Activated CD4-positive, alpha-beta T cell treated with anti-CD3 and anti-CD28 coated beads, Interleukin-2, amount 10 ng/mL, durations not matched to agents 24 days and 14 days (primary cell): ENCODE measurements at regions of chr4 and their contacts with region 1.

Region 1: GRCh38 chr4:184263910-184264732 is 46.4 kb upstream of the ENPP6 start:
- DNase-seq: peak; percentile 97
- H3K4me3 Mint-ChIP-seq: peak overlapping the region; percentile 34
- H3K27ac Mint-ChIP-seq: peak overlapping the region; percentile 84
- H3K4me1 Mint-ChIP-seq: peaks cover 48% of the 10 kb centered on the region
- H3K27me3 Mint-ChIP-seq: no peaks in the 10 kb centered on the region

Region 2: GRCh38 chr4:182881919-182882318 is 1382.2 kb before region 1 on chr4:
- intact Hi-C with region 1: no loop called
- DNase-seq: no peak
- H3K4me3 Mint-ChIP-seq: no peak overlapping the region
- H3K27ac Mint-ChIP-seq: no peak overlapping the region
- H3K4me1 Mint-ChIP-seq: no peaks in the 10 kb centered on the region
- H3K27me3 Mint-ChIP-seq: no peaks in the 10 kb centered on the region

Region 3: GRCh38 chr4:184237612-184238011 is 26.5 kb before region 1 on chr4:
- intact Hi-C with region 1: loop called (anchors 1 kb)
- DNase-seq: peak; percentile 87
- H3K4me3 Mint-ChIP-seq: peak overlapping the region; percentile 68
- H3K27ac Mint-ChIP-seq: peak overlapping the region; percentile 94
- H3K4me1 Mint-ChIP-seq: peaks cover 51% of the 10 kb centered on the region
- H3K27me3 Mint-ChIP-seq: no peaks in the 10 kb centered on the region

Region 4: GRCh38 chr4:184287697-184288255 is 23.7 kb after region 1 on chr4:
- intact Hi-C with region 1: loop called (anchors 1 kb)
- DNase-seq: peak; percentile 64
- H3K4me3 Mint-ChIP-seq: peak overlapping the region; percentile 57
- H3K27ac Mint-ChIP-seq: peak overlapping the region; percentile 89
- H3K4me1 Mint-ChIP-seq: peaks cover 45% of the 10 kb centered on the region
- H3K27me3 Mint-ChIP-seq: no peaks in the 10 kb centered on the region

Region 5: GRCh38 chr4:184457535-184458249 is 193.6 kb after region 1 on chr4:
- intact Hi-C with region 1: loop called (anchors 2 kb)
- DNase-seq: no peak
- H3K4me3 Mint-ChIP-seq: no peak overlapping the region
- H3K27ac Mint-ChIP-seq: peak overlapping the region; percentile 18
- H3K4me1 Mint-ChIP-seq: peaks cover 60% of the 10 kb centered on the region
- H3K27me3 Mint-ChIP-seq: no peaks in the 10 kb centered on the region

Region 6: GRCh38 chr4:184538023-184538599 is 274.0 kb after region 1 on chr4:
- intact Hi-C with region 1: loop called (anchors 1 kb)
- DNase-seq: peak; percentile 89
- H3K4me3 Mint-ChIP-seq: peak overlapping the region; percentile 90
- H3K27ac Mint-ChIP-seq: peak overlapping the region; percentile 92
- H3K4me1 Mint-ChIP-seq: peaks cover 33% of the 10 kb centered on the region
- H3K27me3 Mint-ChIP-seq: no peaks in the 10 kb centered on the region

Region 7: DNA sequence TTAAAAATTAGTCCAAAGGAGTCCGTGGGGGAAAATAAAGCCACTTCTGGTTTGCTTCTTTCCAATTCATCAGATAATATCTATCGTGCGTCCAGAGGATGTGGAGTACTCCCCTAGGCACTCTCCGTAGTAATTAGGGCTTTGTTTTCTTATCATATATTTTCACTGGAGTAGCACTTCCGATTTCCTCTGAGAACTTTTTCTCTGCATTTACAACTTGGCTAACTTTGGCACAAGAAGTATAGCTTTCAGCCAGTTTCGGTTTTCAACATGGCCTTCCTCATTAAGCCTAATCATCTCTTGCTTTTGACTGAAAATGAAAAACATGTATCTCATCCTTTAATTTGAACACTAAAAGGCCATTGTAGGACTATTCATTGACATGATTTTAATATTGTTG is 304.6 kb after region 1 on chr4:
- intact Hi-C with region 1: no loop called
- DNase-seq: no peak
- H3K4me3 Mint-ChIP-seq: no peak overlapping the region
- H3K27ac Mint-ChIP-seq: no peak overlapping the region
- H3K4me1 Mint-ChIP-seq: peaks cover 5% of the 10 kb centered on the region
- H3K27me3 Mint-ChIP-seq: no peaks in the 10 kb centered on the region

Region 8: DNA sequence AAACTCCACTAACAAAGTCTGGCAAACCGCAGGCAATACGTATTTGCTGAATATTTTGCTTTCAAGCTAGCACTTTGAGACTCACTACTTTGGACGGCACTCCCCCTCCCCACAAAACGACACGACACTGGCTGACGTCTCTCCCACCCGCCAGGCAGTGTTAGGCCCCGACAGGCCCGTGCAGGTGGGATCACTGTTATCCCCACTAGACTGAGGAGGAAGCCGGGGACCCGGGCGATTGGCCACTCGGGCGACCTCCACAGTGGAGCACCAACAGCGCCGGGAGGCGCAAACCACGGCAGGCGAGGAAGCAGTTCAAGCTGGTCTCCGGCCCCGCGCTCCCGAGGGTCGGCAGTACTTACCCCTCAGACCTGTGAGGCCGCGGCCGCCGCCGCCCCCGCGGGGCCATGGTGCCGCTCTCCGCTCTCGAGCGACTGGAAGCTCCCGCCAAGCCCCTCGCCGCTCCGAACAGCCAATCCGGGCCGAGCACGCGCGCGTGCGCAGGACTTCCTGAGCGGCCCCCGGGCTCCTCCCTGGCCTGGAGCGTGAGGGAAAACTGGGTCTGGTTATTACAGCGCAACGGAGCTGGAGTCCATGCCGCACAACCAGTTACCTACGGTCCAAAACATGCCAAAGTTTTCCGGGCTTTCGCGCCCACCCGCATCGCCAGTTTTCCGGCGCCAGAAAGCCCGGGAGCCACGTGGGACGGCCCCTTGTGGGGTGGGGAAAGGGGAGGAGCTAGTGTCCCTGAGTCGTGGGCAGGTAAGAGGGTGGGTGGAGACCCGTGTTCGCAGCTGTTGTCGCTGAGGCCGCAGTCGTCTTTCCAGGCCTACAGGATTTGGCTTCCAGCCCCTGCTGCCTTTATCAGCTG is 469.8 kb after region 1 on chr4 and contains the start of gene CENPU:
- intact Hi-C with region 1: loop called (anchors 2 kb)
- DNase-seq: peak; percentile 99
- H3K4me3 Mint-ChIP-seq: peak within 1 kb of the TSS; percentile 96
- H3K27ac Mint-ChIP-seq: peak within 1 kb of the TSS; percentile 93
- H3K4me1 Mint-ChIP-seq: peaks cover 41% of the 10 kb centered on the region
- H3K27me3 Mint-ChIP-seq: no peaks in the 10 kb centered on the region
- total RNA-seq, gene CENPU: 71.7 and 75.5 TPM in 2 replicates

Region 9: GRCh38 chr4:184968784-184969201 is 704.7 kb after region 1 on chr4:
- intact Hi-C with region 1: loop called (anchors 10 kb)
- DNase-seq: no peak
- H3K4me3 Mint-ChIP-seq: no peak overlapping the region
- H3K27ac Mint-ChIP-seq: no peak overlapping the region
- H3K4me1 Mint-ChIP-seq: peaks cover 2% of the 10 kb centered on the region
- H3K27me3 Mint-ChIP-seq: peaks cover 9% of the 10 kb centered on the region